GM12878 (cell line): ENCODE measurements at regions of chr1 and their contacts with region 1.

Region 1: GRCh38 chr1:168439456-168440375 is 104.1 kb downstream of the XCL2 start:
- DNase-seq: peak; percentile 45
- ATAC-seq: peak; percentile 97
- H3K4me3 ChIP-seq: no peak overlapping the region
- H3K27ac ChIP-seq: no peak overlapping the region
- H3K4me1 ChIP-seq: no peaks in the 10 kb centered on the region
- H3K27me3 ChIP-seq: no peaks in the 10 kb centered on the region; a peak in 1 of 4 replicates
- CTCF ChIP-seq: peak; percentile 66 to 84 (median 73)
- EP300 ChIP-seq: no peak
- POLR2A ChIP-seq: no peak
- RAD21 ChIP-seq: peak; percentile 93

Region 2: GRCh38 chr1:168466092-168466713 is 26.5 kb after region 1 on chr1:
- CTCF ChIA-PET with region 1: interaction called, 23 read pairs
- POLR2A ChIA-PET with region 1: interaction called, 14 read pairs
- RAD21 ChIA-PET with region 1: interaction called, 29 read pairs
- SMC1A ChIA-PET with region 1: interaction called, 114 read pairs
- in situ Hi-C with region 1: no loop called
- intact Hi-C with region 1: no loop called
- DNase-seq: peak; percentile 88
- ATAC-seq: peak; percentile 89
- H3K4me3 ChIP-seq: peak overlapping the region; percentile 25; the same call in 1 of the 2 replicates
- H3K27ac ChIP-seq: peak overlapping the region; percentile 56
- H3K4me1 ChIP-seq: peaks cover 25% of the 10 kb centered on the region
- H3K27me3 ChIP-seq: no peaks in the 10 kb centered on the region
- CTCF ChIP-seq: no peak
- EP300 ChIP-seq: peak; percentile 23 to 46; a peak in 1 of 4 replicates
- POLR2A ChIP-seq: no peak
- RAD21 ChIP-seq: no peak

Region 3: GRCh38 chr1:168520052-168520751 is 80.5 kb after region 1 on chr1:
- CTCF ChIA-PET with region 1: interaction called, 5 read pairs
- POLR2A ChIA-PET with region 1: interaction called, 3 read pairs
- RAD21 ChIA-PET with region 1: interaction called, 15 read pairs
- SMC1A ChIA-PET with region 1: interaction called, 37 read pairs
- in situ Hi-C with region 1: no loop called
- intact Hi-C with region 1: no loop called
- DNase-seq: no peak
- ATAC-seq: peak; percentile 95
- H3K4me3 ChIP-seq: no peak overlapping the region
- H3K27ac ChIP-seq: no peak overlapping the region
- H3K4me1 ChIP-seq: peaks cover 10% of the 10 kb centered on the region
- H3K27me3 ChIP-seq: no peaks in the 10 kb centered on the region; a peak in 1 of 4 replicates
- CTCF ChIP-seq: no peak
- EP300 ChIP-seq: peak; percentile 46 to 74; a peak in 2 of 4 replicates
- POLR2A ChIP-seq: no peak
- RAD21 ChIP-seq: no peak

Region 4: GRCh38 chr1:168567007-168567406 is 127.3 kb after region 1 on chr1:
- CTCF ChIA-PET with region 1: interaction called, 7 read pairs
- POLR2A ChIA-PET with region 1: no interaction called
- RAD21 ChIA-PET with region 1: interaction called, 4 read pairs
- SMC1A ChIA-PET with region 1: interaction called, 5 read pairs
- in situ Hi-C with region 1: loop called (anchors 5 kb)
- intact Hi-C with region 1: no loop called
- DNase-seq: no peak
- ATAC-seq: peak; percentile 59
- H3K4me3 ChIP-seq: no peak overlapping the region
- H3K27ac ChIP-seq: no peak overlapping the region
- H3K4me1 ChIP-seq: no peaks in the 10 kb centered on the region
- H3K27me3 ChIP-seq: peaks cover 0 to 2% of the 10 kb centered on the region in 2 experiments; a peak in 1 of 4 replicates
- CTCF ChIP-seq: no peak
- EP300 ChIP-seq: no peak
- POLR2A ChIP-seq: no peak
- RAD21 ChIP-seq: no peak

Region 5: GRCh38 chr1:168637350-168637991 is 197.8 kb after region 1 on chr1:
- CTCF ChIA-PET with region 1: interaction called, 38 read pairs
- POLR2A ChIA-PET with region 1: no interaction called
- RAD21 ChIA-PET with region 1: interaction called, 18 read pairs
- SMC1A ChIA-PET with region 1: interaction called, 35 read pairs
- in situ Hi-C with region 1: no loop called
- intact Hi-C with region 1: no loop called
- DNase-seq: no peak
- ATAC-seq: peak; percentile 92
- H3K4me3 ChIP-seq: no peak overlapping the region
- H3K27ac ChIP-seq: no peak overlapping the region
- H3K4me1 ChIP-seq: no peaks in the 10 kb centered on the region
- H3K27me3 ChIP-seq: no peaks in the 10 kb centered on the region
- CTCF ChIP-seq: peak; percentile 64 to 80 (median 73)
- EP300 ChIP-seq: no peak
- POLR2A ChIP-seq: no peak
- RAD21 ChIP-seq: peak; percentile 65

Region 6: DNA sequence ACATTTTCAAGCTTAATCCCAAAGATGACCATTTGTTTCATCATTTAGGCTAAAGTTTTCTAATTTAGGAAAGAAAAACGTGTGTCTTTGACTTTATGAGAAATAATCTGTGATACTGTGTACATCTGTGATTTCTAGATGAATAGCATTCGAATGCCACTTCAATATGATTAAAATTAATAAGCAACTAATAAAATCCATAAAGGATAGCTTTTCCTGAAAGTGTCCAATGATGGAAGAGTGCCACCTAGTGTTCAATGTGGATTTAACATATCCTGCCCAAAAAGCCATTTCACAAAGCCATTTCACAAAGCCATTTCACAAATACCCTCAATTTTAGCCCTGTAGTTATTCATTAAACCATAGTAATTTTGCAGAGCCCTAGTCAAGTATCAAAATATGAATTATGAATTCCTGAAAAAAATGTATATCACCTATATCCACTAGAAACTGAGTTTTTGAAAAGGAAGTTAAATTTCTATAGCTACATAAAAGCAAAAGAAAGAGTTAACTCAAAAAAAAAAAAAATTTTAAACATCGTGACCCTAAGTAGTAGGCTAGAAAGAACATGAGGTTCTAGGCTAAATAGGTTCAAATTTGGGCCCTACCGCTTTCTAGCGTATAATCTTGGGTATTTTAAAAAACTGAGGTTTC is 908.8 kb after region 1 on chr1:
- CTCF ChIA-PET with region 1: interaction called, 51 read pairs
- POLR2A ChIA-PET with region 1: interaction called, 3 read pairs
- RAD21 ChIA-PET with region 1: interaction called, 22 read pairs
- SMC1A ChIA-PET with region 1: interaction called, 36 read pairs
- in situ Hi-C with region 1: loop called (anchors 10 kb)
- intact Hi-C with region 1: loop called (anchors 5 kb)
- DNase-seq: peak; percentile 19
- ATAC-seq: peak; percentile 61
- H3K4me3 ChIP-seq: no peak overlapping the region
- H3K27ac ChIP-seq: no peak overlapping the region
- H3K4me1 ChIP-seq: no peaks in the 10 kb centered on the region
- H3K27me3 ChIP-seq: no peaks in the 10 kb centered on the region
- CTCF ChIP-seq: peak; percentile 57 to 78 (median 62)
- EP300 ChIP-seq: no peak
- POLR2A ChIP-seq: no peak
- RAD21 ChIP-seq: peak; percentile 92